WTC11 (cell line): ENCODE measurements at regions of chr17 and their contacts with region 1.

Region 1: DNA sequence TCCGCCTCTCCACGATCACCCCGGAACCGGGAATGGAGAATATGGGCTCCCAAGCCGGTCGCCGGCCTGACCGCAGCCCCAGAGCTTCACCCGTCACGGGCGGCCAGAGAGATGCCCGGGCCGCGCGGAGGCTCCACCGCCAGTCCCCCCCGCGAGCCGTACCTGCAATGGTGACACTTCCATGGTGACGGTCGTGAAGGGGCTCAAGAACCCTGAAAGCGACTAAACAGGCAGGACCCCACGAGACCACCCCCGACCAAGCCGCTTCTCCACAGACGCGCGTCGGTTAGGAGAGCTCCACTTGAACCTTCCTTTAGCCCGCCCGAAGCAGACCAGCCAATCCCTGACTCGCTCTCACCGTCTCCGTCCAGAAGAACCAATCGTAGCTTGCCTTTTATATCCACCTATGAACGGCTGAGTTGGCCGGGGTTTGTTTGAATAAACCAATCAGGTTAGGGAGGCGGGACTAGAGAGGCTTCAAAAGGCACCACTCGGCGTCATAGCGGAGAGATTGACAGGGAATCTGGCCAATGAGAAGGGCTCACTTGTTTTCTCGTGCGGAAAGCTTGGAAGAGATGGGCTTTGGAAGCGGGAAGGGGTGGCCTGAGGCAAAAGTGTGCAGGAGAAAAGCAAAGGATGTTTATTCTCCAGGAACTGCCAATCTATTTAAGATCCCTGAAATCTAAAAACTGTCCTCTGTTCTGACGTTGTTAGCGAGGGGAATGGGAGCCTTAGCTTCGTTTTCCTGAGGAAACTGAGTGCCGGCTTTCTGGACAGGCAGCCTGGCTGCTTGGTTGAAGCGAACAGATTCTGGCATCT is at the start of gene TOP2A:
- DNase-seq: peak; percentile 97
- ATAC-seq: peak; percentile 95
- H3K4me3 Mint-ChIP-seq: peak within 1 kb of the TSS; percentile 97
- H3K27ac Mint-ChIP-seq: peak within 1 kb of the TSS; percentile 84
- H3K4me1 Mint-ChIP-seq: peaks cover 49% of the 10 kb centered on the region
- H3K27me3 Mint-ChIP-seq: no peaks in the 10 kb centered on the region; the same call in 1 of the 2 replicates
- CTCF ChIP-seq: no peak
- total RNA-seq, gene TOP2A: 273 to 307 TPM (median 292 TPM) in 3 replicates

Region 2: GRCh38 chr17:39636927-39637736 is 780.7 kb before region 1 on chr17 and contains the start of gene STARD3:
- CTCF ChIA-PET with region 1: no interaction called
- POLR2A ChIA-PET with region 1: interaction called, 11 read pairs
- DNase-seq: peak; percentile 94
- ATAC-seq: peak; percentile 72
- H3K4me3 Mint-ChIP-seq: peak within 1 kb of the TSS; percentile 76
- H3K27ac Mint-ChIP-seq: peak within 1 kb of the TSS; percentile 64
- H3K4me1 Mint-ChIP-seq: peaks cover 70% of the 10 kb centered on the region
- H3K27me3 Mint-ChIP-seq: no peaks in the 10 kb centered on the region
- CTCF ChIP-seq: no peak
- total RNA-seq, gene STARD3: 64.9 to 75.3 TPM (median 65.4 TPM) in 3 replicates

Region 3: GRCh38 chr17:40303009-40303657 is 114.7 kb before region 1 on chr17:
- CTCF ChIA-PET with region 1: no interaction called
- POLR2A ChIA-PET with region 1: no interaction called
- DNase-seq: peak; percentile 48
- ATAC-seq: no peak
- H3K4me3 Mint-ChIP-seq: no peak overlapping the region
- H3K27ac Mint-ChIP-seq: no peak overlapping the region
- H3K4me1 Mint-ChIP-seq: peaks cover 10% of the 10 kb centered on the region
- H3K27me3 Mint-ChIP-seq: no peaks in the 10 kb centered on the region
- CTCF ChIP-seq: peak; percentile 23

Region 4: DNA sequence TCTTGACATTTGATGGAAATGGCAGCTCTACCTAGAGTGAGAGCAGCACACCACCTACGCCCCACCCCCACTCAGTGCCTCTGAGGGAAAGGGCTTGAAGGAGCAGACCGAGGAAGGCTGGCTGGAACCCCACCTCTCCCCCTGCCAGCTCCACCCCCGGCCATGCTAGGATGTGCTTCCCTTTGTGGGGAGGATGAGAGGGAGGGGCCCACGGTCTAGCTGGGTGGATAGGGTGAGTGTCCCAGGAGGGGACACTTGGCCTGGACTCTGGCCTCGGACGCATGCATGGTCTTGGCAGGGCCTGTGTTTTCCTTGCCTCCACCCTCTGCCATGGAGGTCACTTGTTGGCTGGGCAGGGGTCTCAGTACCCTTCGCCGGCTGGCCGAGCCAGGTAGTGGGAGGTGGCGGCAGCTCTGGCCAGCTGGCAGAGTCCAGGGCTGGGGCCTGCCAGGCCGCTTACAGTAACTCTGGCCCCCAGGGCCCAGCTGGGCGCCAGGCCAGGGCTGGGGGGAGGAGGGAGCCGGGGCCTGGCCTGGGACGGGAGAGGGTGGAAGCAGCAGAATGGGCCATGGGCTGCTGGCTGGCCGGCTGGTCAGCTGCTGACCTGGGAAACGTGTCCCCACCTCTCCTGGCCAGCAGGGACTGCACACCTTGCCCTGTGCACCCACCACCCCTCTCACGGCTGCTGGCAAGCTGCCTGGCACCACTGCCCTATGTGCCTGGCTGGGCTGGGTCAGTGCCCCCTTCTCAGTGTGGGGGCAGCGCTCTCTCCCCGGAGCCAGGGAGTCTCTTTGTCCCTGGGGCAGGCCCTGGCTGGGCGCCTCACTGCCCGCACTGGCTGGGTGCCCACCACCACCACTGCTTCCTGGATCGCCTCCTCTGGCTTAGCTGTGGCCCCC is 85.8 kb before region 1 on chr17:
- CTCF ChIA-PET with region 1: no interaction called
- POLR2A ChIA-PET with region 1: no interaction called
- DNase-seq: no peak
- ATAC-seq: peak; percentile 49
- H3K4me3 Mint-ChIP-seq: no peak overlapping the region
- H3K27ac Mint-ChIP-seq: no peak overlapping the region
- H3K4me1 Mint-ChIP-seq: peaks cover 9% of the 10 kb centered on the region
- H3K27me3 Mint-ChIP-seq: peaks cover 11% of the 10 kb centered on the region
- CTCF ChIP-seq: no peak

Region 5: DNA sequence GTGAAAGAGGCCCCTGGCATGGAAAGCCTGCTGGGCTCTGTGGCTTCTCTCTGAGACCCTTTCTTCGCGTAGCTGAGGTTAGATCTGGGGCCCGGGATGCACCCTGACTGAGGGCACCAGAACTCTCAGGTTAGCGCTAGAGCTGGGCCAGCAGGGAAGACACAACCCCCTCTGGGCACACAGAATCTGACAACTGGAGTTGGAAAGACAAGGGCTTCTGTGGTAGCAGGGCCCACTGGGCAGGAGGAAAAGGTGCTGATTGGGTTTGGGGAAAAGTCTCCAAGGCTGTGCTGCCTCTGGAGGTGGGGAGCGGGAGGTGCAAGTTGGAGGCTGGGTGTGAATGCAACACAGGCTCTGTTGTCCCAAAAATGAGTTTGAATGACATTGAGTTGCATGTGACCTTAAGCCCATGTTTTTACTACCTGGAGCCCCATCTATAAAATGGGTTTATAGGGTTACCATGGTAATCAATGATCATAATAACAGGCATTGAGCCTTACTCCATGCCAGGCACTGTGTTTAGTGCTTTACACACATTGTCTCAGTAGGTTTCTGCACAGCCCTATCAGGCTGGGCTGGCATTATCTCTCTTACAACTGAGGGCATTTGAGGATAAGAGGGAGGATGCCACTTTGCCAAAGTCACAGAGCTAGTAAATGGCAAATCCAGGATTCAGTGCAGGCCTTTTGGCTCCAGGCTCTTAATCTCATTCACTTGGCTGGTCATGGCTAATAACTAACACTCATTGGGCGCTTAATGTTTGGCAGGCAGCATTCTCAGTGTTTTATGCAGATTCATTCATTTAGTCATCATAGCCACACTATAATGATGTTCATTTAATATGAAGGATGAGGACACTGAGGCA is 16.0 kb after region 1 on chr17:
- CTCF ChIA-PET with region 1: interaction called, 17 read pairs
- POLR2A ChIA-PET with region 1: no interaction called
- DNase-seq: peak; percentile 75
- ATAC-seq: peak; percentile 98
- H3K4me3 Mint-ChIP-seq: no peak overlapping the region
- H3K27ac Mint-ChIP-seq: no peak overlapping the region
- H3K4me1 Mint-ChIP-seq: peaks cover 6% of the 10 kb centered on the region
- H3K27me3 Mint-ChIP-seq: peaks cover 2% of the 10 kb centered on the region; the same call in 1 of the 2 replicates
- CTCF ChIP-seq: peak; percentile 66

Region 6: DNA sequence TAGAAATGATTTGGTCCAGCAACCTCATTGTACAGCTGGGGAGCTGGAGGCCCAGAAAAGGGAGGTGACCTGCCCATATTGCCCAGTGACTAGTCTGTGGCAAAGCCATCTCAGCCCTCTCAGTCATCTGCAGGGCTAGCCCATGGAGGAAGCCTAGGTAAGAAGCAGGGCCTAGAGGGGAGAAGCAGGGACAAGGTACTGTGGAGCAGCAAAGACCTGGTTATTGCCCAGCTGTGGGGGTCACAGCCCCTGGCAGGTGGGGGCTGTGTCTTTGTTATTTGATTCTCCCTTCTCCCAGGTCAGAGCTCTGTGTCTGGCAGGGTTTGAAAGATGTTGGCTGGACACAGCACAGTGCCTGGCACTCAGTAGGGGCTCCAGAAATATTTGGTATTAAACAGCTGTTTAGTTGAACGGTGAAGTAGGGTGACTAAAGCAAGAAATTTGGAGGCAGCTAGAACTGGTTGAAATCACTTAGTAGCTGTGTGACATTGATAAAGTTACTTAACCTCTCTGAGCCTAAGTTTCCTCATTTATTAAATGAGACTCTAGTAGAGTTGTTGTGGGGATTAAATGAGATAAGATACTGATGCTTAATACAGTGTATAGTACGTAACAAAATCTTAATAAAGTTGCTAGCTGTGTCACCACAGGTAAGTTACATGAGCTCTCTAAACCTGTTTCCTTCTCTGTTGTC is 130.1 kb after region 1 on chr17:
- CTCF ChIA-PET with region 1: no interaction called
- POLR2A ChIA-PET with region 1: no interaction called
- DNase-seq: no peak
- ATAC-seq: no peak
- H3K4me3 Mint-ChIP-seq: no peak overlapping the region
- H3K27ac Mint-ChIP-seq: peak overlapping the region; percentile 65; the same call in 1 of the 2 replicates
- H3K4me1 Mint-ChIP-seq: peaks cover 26% of the 10 kb centered on the region
- H3K27me3 Mint-ChIP-seq: no peaks in the 10 kb centered on the region
- CTCF ChIP-seq: no peak